Ovary (tissue), 10 donors: ENCODE measurements at regions of chr11 and their contacts with region 1.

Region 1: GRCh38 chr11:62048065-62048464 is 75.7 kb upstream of the INCENP start:
- DNase-seq: no peak
- H3K4me3 ChIP-seq: no peak overlapping the region
- H3K27ac ChIP-seq: no peak overlapping the region
- H3K4me1 ChIP-seq: no peaks in the 10 kb centered on the region
- H3K27me3 ChIP-seq: no peaks in the 10 kb centered on the region
- CTCF ChIP-seq: no peak
- EP300 ChIP-seq: no peak
- POLR2A ChIP-seq: no peak

Region 2: GRCh38 chr11:60211206-60211605 is 1836.9 kb before region 1 on chr11:
- intact Hi-C with region 1: loop called in 1 of 4 experiments (anchors 10 kb)
- DNase-seq: no peak
- H3K4me3 ChIP-seq: no peak overlapping the region
- H3K27ac ChIP-seq: no peak overlapping the region
- H3K4me1 ChIP-seq: no peaks in the 10 kb centered on the region
- H3K27me3 ChIP-seq: no peaks in the 10 kb centered on the region
- CTCF ChIP-seq: no peak
- EP300 ChIP-seq: no peak
- POLR2A ChIP-seq: no peak